Sigmoid colon (tissue), 7 donors: ENCODE measurements at regions of chr16 and their contacts with region 1.

Region 1: GRCh38 chr16:29815793-29816693 is at the start of gene PAGR1:
- DNase-seq: peak; percentile 100
- H3K4me3 ChIP-seq: peak within 1 kb of the TSS; percentile 58 to 78 (median 66)
- H3K27ac ChIP-seq: peak within 1 kb of the TSS; percentile 94 to 97 (median 95)
- H3K4me1 ChIP-seq: peaks cover 0 to 79% (median 66%) of the 10 kb centered on the region in 4 donors
- H3K27me3 ChIP-seq: no peaks in the 10 kb centered on the region
- CTCF ChIP-seq: peak; percentile 68 to 88 (median 82)
- EP300 ChIP-seq: peak in 1 of 4 donors; percentile 35
- POLR2A ChIP-seq: peak; percentile 24 to 59
- total RNA-seq, gene PAGR1: 18.5 to 29.9 (median 25.7) TPM

Region 2: DNA sequence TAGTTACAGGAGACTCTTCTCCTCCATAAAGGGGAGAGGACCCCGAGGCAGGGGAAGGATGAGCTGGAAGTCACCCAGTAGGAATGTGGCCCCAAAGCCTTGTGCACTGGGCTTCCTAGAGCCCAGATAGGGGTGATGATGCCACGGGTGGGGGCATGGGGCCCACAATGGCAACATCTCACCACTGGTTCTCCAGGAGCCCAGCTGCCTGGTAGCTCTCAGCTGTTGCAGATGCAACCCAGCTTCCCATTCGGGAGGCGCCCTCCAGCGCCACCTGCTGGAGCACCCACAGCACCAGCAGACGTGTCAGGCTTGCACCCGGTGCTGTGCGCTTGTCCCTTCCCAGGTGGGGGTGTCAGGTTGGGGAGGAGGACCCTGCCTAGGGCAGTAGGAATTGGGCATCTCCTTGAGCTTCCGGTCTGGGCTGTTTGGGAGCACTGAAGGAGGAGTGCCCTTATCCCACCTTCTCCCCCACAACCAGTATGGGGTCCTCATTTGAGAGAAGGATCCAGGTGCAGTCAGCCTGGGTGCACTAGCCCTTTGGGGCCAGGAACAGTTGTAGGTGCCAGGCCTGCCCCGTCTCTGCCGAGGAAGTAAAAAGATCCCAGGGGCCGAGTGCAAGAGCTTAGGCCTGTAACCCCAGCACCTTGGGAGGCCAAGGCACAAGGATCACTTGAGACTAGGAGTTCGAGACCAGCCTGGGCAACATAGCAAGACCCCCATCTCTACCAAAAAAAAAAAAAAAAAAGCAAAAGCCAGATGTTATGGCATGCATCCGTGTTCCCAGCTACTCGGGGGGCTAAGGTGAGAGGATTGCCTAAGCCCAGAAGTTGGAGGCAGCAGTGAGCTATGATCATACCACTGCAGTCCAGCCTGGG is 32.6 kb after region 1 on chr16:
- intact Hi-C with region 1: loop called (anchors 2 kb)
- DNase-seq: peak; percentile 86
- H3K4me3 ChIP-seq: no peak overlapping the region
- H3K27ac ChIP-seq: peak overlapping the region in 3 of 4 donors; percentile 9 to 29 (median 23)
- H3K4me1 ChIP-seq: peaks cover 0 to 16% (median 1%) of the 10 kb centered on the region in 4 donors
- H3K27me3 ChIP-seq: no peaks in the 10 kb centered on the region
- CTCF ChIP-seq: peak; percentile 72 to 89 (median 83)
- EP300 ChIP-seq: no peak
- POLR2A ChIP-seq: no peak

Region 3: DNA sequence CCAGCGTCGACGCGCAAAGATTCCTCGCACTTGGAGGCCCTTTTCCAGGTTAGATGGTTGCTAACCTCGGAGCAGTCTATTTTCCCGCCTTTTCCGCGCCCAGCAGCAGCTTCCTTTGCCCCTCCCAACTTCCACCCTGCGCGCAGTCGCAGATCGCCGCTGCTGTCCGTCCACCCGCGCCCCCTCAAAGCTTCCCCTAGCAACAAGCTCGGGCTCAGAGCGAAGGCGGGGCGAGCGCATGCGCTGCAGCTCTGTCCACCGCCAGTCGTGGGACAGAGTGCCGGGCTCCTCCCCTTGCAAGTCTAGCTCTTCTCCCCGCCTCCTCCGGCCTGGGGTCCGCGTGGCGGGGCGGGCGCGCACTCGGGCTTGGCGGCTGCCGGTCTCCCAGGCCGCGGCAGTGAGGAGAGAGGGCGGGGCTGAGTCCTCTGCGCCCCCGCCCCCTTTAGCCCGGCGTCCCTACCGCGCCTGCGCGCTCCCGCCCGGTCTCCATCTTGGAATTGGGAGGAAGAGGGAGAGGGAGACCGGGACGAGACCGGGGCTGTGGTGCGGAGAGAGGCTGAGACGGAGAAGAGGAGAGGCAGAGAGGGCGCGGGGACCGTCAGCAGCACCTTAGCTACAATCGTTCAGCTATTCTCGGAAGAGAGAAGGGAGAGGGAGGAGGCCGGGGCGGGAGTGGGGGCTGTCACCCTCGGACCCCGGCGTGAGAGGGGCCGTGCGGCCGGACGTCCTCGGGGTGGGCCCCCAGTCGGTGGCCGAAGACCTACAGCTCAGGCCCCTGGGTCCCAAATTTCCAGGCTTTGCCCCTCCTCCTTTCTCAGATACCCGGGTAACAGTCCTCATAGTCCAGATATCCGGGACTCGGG is 157.6 kb after region 1 on chr16 and contains the start of gene TAOK2:
- intact Hi-C with region 1: loop called (anchors 5 kb)
- DNase-seq: peak; percentile 100
- H3K4me3 ChIP-seq: peak within 1 kb of the TSS; percentile 81 to 86 (median 84)
- H3K27ac ChIP-seq: peak within 1 kb of the TSS; percentile 91 to 93 (median 92)
- H3K4me1 ChIP-seq: peaks cover 0 to 34% (median 31%) of the 10 kb centered on the region in 4 donors
- H3K27me3 ChIP-seq: no peaks in the 10 kb centered on the region
- CTCF ChIP-seq: no peak
- EP300 ChIP-seq: no peak
- POLR2A ChIP-seq: peak; percentile 87
- total RNA-seq, gene TAOK2: 26.8 to 38.5 (median 29.7) TPM

Region 4: GRCh38 chr16:30065143-30065850 is 249.3 kb after region 1 on chr16 and contains the start of gene ALDOA:
- intact Hi-C with region 1: loop called (anchors 5 kb)
- DNase-seq: peak; percentile 99
- H3K4me3 ChIP-seq: peak within 1 kb of the TSS; percentile 73 to 98 (median 82)
- H3K27ac ChIP-seq: peak within 1 kb of the TSS; percentile 96 to 100 (median 98)
- H3K4me1 ChIP-seq: peaks cover 0 to 56% (median 48%) of the 10 kb centered on the region in 4 donors
- H3K27me3 ChIP-seq: no peaks in the 10 kb centered on the region
- CTCF ChIP-seq: no peak
- EP300 ChIP-seq: peak in 2 of 4 donors; percentile 49 to 77
- POLR2A ChIP-seq: peak in 1 of 2 donors; percentile 99
- total RNA-seq, gene ALDOA: 905 to 1,010 (median 960) TPM

Region 5: GRCh38 chr16:30657866-30658730 is 842.1 kb after region 1 on chr16 and contains the start of gene FBRS:
- intact Hi-C with region 1: loop called (anchors 10 kb)
- DNase-seq: peak; percentile 100
- H3K4me3 ChIP-seq: peak within 1 kb of the TSS; percentile 91 to 99 (median 97)
- H3K27ac ChIP-seq: peak within 1 kb of the TSS; percentile 96 to 98 (median 97)
- H3K4me1 ChIP-seq: peaks cover 0 to 58% (median 53%) of the 10 kb centered on the region in 4 donors
- H3K27me3 ChIP-seq: no peaks in the 10 kb centered on the region
- CTCF ChIP-seq: peak in 3 of 4 experiments; percentile 8 to 66 (median 38)
- EP300 ChIP-seq: peak in 2 of 4 donors; percentile 49 to 52
- POLR2A ChIP-seq: peak; percentile 78 to 94
- total RNA-seq, gene FBRS: 12.5 to 29.6 (median 22.7) TPM